ENCODE measurements at regions of chr15 and their contacts with region 1.

Region 1: GRCh38 chr15:71883447-71883846 is 73.1 kb downstream of the NR2E3 start:
- DNase-seq: no peak
- H3K4me3 ChIP-seq: no peak overlapping the region
- H3K27ac ChIP-seq: no peak overlapping the region
- H3K4me1 ChIP-seq: no peaks in the 10 kb centered on the region
- H3K27me3 ChIP-seq: no peaks in the 10 kb centered on the region
- CTCF ChIP-seq: no peak
- POLR2A ChIP-seq: no peak

Region 2: GRCh38 chr15:71437404-71438318 is 445.8 kb before region 1 on chr15:
- intact Hi-C with region 1: no loop called
- DNase-seq: no peak
- H3K4me3 ChIP-seq: no peak overlapping the region
- H3K27ac ChIP-seq: no peak overlapping the region
- H3K4me1 ChIP-seq: no peaks in the 10 kb centered on the region
- H3K27me3 ChIP-seq: no peaks in the 10 kb centered on the region
- CTCF ChIP-seq: no peak
- POLR2A ChIP-seq: no peak

Region 3: DNA sequence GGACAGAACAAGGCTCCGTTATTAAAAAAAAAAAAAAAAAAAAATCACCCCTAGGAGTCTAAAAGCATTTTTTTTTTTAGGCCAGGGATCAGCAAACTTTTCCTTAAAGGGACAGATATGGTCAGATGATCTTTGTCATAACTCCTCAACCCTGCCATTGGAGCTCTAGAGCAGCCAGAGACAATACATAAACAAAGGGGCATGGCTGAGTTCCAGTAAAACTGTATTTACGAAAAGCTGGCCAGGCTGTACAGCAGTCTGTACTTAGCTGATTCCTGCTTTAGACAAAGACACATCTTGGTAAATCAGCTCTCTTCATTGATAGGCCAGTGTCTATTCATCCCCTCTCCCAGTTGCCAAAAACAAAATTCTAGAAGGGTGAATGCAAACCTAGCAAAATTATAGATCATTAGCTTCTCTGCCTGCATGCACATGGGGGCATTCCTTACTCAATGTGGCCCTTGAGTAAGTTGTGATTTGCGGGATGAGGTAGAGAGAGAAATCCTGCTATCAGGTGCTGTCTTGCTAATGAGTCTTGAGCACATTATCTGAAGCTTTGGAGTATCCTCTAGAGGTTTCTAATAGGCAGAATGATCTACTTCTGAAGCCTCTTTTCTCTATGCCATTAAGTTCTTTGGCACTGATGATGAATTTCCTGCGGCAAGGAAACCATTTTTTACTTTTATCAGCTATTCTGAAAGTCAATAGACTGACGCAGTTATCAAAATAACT is 270.0 kb after region 1 on chr15:
- intact Hi-C with region 1: loop called (anchors 5 kb)
- DNase-seq: no peak
- H3K4me3 ChIP-seq: no peak overlapping the region
- H3K27ac ChIP-seq: peak overlapping the region; percentile 92 to 93
- H3K4me1 ChIP-seq: peaks cover 0 to 5% of the 10 kb centered on the region in 2 donors
- H3K27me3 ChIP-seq: no peaks in the 10 kb centered on the region
- CTCF ChIP-seq: no peak
- POLR2A ChIP-seq: no peak